Mammary epithelial cell (primary cell): ENCODE measurements at regions of chr2 and their contacts with region 1.

Region 1: GRCh38 chr2:45128580-45128997 is 119.3 kb upstream of the SIX2 start:
- DNase-seq: peak; percentile 77
- H3K4me3 ChIP-seq: no peak overlapping the region
- H3K27ac ChIP-seq: no peak overlapping the region
- H3K4me1 ChIP-seq: no peaks in the 10 kb centered on the region
- H3K27me3 ChIP-seq: no peaks in the 10 kb centered on the region
- CTCF ChIP-seq: no peak

Region 2: GRCh38 chr2:45055162-45055605 is 73.4 kb before region 1 on chr2:
- CTCF ChIA-PET with region 1: no interaction called
- dilution Hi-C with region 1: no loop called
- in situ Hi-C with region 1: no loop called
- intact Hi-C with region 1: no loop called
- DNase-seq: no peak
- H3K4me3 ChIP-seq: no peak overlapping the region
- H3K27ac ChIP-seq: no peak overlapping the region
- H3K4me1 ChIP-seq: no peaks in the 10 kb centered on the region
- H3K27me3 ChIP-seq: peaks cover 3% of the 10 kb centered on the region
- CTCF ChIP-seq: no peak

Region 3: DNA sequence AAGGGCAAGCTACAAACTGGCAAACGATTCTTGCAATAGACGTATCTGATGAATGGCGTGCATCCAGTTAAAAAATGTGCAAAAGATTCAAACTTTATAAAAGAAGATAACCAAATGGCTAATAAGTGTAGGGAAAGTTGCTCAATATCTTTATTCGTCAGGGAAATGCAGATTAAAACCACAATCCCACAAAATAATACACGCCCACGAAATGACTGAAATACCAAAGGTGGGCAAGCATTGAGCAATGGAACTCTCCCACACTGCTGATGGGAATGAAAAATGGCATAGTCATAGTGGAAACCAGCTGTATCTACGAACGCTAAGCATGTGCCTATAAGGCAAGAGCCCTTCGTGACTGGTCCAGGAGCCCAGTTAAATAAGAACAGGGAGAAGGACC is 49.3 kb after region 1 on chr2:
- CTCF ChIA-PET with region 1: interaction called, 10 read pairs
- dilution Hi-C with region 1: no loop called
- in situ Hi-C with region 1: no loop called
- intact Hi-C with region 1: no loop called
- DNase-seq: peak; percentile 97
- H3K4me3 ChIP-seq: no peak overlapping the region
- H3K27ac ChIP-seq: peak overlapping the region; percentile 58
- H3K4me1 ChIP-seq: peaks cover 46% of the 10 kb centered on the region
- H3K27me3 ChIP-seq: no peaks in the 10 kb centered on the region
- CTCF ChIP-seq: no peak